Mammary epithelial cell (primary cell): ENCODE measurements at regions of chr4 and their contacts with region 1.

Region 1: GRCh38 chr4:24419181-24420034 is 164.9 kb downstream of the DHX15 start:
- DNase-seq: peak; percentile 50
- H3K4me3 ChIP-seq: no peak overlapping the region
- H3K27ac ChIP-seq: no peak overlapping the region
- H3K4me1 ChIP-seq: no peaks in the 10 kb centered on the region
- H3K27me3 ChIP-seq: peaks cover 3% of the 10 kb centered on the region
- CTCF ChIP-seq: peak; percentile 96

Region 2: DNA sequence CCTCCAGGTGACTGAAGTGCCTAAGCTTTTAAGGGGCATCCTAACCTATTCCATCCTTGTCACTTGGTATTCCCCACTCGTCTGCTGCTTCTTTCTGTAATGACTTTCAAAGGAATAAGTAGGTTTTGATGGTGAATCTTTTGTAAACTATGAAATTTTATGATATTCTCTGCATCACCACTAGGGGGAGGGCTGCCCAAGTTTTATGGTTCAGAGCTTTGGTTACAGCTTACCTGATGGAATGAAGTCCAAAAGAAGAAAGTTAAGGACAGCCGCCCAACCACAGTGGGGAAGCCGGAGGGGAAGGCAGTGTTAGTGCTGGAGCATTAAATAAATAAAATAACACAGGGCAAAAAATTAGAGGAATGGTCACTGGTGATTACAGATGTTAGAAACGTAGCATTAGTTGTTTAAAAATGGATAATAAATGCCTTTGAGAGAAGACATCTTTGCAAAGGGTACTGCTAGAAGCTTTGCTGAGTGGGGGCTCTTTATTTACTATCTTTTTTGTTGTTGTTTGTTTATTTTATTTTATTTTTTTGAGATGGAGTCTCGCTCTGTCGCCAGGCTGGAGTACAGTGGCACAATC is 1521.8 kb before region 1 on chr4:
- CTCF ChIA-PET with region 1: no interaction called
- dilution Hi-C with region 1: no loop called
- in situ Hi-C with region 1: no loop called
- intact Hi-C with region 1: loop called (anchors 1 kb)
- DNase-seq: peak; percentile 4
- H3K4me3 ChIP-seq: no peak overlapping the region
- H3K27ac ChIP-seq: no peak overlapping the region
- H3K4me1 ChIP-seq: no peaks in the 10 kb centered on the region
- H3K27me3 ChIP-seq: no peaks in the 10 kb centered on the region
- CTCF ChIP-seq: peak; percentile 77 to 90

Region 3: DNA sequence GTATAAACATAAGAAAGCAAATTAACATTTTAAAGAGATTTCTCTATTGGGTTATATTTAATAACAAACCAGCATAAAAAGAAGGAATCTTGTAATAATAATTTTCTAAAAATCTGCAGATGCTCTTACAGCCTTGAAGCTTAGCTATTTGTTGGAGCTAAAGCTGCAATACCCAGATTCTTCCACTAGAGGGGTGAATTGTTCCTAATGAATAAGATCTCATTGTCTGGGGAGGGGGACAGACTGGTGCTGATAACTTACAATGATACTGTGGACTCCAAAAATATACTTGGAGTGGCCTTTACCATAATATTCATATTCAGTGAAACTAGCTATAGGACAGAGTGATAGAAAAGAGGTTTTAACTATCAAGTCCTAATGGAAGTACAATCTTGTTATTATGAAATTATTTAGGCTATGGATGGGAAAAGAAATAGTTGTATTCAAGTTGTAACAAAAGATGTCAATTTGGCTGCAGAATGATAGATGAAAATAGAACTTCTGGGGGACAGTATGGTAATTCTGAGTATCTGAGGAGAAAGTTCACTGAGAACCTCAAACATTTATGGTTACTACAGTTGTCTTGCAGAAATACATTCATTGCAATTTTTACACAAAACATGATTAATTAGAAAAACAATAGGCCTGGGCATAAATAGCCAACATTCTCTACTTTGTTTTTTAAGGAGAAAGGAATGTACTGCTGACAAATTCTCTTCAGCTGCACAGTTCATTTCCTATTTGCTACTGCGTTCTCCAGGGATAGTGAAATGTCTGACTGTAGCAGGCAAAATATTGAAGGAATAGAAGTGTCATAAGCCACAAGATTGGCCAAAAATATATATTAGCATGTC is 1283.4 kb before region 1 on chr4:
- CTCF ChIA-PET with region 1: interaction called, 4 read pairs
- dilution Hi-C with region 1: no loop called
- in situ Hi-C with region 1: loop called in 1 of 2 experiments (anchors 25 kb)
- intact Hi-C with region 1: loop called (anchors 5 kb)
- DNase-seq: peak; percentile 8
- H3K4me3 ChIP-seq: no peak overlapping the region
- H3K27ac ChIP-seq: no peak overlapping the region
- H3K4me1 ChIP-seq: no peaks in the 10 kb centered on the region
- H3K27me3 ChIP-seq: no peaks in the 10 kb centered on the region
- CTCF ChIP-seq: peak; percentile 74 to 78

Region 4: DNA sequence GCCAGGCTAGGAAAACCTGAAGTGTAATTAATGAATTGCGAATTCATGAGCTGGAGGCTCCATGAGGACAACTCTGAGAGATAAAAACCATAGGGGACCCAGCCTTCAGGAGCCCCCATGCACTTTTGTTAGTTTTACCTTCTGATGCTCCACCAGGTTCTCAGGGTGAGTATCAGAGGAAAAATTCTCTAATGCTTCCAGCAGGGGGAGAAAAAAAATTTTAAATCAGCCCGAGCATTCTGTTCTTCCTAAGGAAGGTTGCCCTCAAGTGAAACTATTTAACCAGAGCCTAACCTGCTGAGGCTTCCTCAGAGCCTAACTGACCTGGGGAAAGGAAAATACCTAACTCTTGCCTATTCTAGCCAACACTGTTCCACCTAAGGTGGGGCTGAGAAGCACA is 1082.1 kb before region 1 on chr4:
- CTCF ChIA-PET with region 1: no interaction called
- dilution Hi-C with region 1: no loop called
- in situ Hi-C with region 1: no loop called
- intact Hi-C with region 1: loop called (anchors 5 kb)
- DNase-seq: no peak
- H3K4me3 ChIP-seq: no peak overlapping the region
- H3K27ac ChIP-seq: no peak overlapping the region
- H3K4me1 ChIP-seq: peaks cover 17% of the 10 kb centered on the region
- H3K27me3 ChIP-seq: no peaks in the 10 kb centered on the region
- CTCF ChIP-seq: peak; percentile 28 to 36

Region 5: GRCh38 chr4:23857367-23857959 is 561.9 kb before region 1 on chr4:
- CTCF ChIA-PET with region 1: no interaction called
- dilution Hi-C with region 1: no loop called
- in situ Hi-C with region 1: no loop called
- intact Hi-C with region 1: loop called (anchors 1 kb)
- DNase-seq: peak; percentile 9
- H3K4me3 ChIP-seq: no peak overlapping the region
- H3K27ac ChIP-seq: no peak overlapping the region
- H3K4me1 ChIP-seq: no peaks in the 10 kb centered on the region
- H3K27me3 ChIP-seq: no peaks in the 10 kb centered on the region
- CTCF ChIP-seq: peak; percentile 9 to 51

Region 6: DNA sequence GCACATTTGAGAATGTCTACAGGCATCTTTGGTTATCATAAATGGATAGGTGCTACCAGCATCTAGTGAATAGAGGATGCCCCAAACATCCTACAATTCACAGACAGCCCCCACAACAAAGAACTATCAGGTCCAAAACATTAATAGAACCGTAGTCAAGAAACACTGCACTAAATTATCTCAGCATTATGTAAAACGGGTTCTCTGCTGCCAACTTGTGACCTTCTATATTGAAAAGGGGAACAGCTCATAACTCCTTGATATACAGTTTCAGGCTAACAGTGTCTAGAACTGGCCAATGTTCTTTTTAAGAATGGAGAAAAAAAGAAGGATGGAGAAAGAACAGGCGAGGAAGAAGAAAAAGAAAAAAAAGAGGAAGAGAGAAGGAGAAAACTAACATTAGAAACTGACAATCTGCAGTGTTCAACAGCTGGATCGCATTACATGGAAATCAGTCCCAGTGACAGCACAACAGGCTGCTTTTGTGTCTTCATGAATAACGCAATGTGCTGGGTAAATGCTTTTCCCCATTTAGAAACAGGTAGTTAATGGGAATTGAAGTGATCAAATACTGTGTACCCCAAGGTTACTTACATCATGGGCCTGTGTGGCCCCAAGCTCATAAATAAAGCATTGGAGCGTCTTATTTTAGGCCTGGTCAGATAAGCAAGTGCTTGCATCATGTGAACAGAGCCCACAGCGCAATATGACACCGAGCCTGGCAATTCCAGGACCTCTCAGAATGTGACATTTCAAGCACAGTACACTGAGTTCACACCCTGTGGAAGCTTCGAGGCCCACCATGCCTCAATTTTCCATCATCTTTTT is 174.5 kb before region 1 on chr4:
- CTCF ChIA-PET with region 1: no interaction called
- dilution Hi-C with region 1: no loop called
- in situ Hi-C with region 1: no loop called
- intact Hi-C with region 1: no loop called
- DNase-seq: no peak
- H3K4me3 ChIP-seq: no peak overlapping the region
- H3K27ac ChIP-seq: no peak overlapping the region
- H3K4me1 ChIP-seq: no peaks in the 10 kb centered on the region
- H3K27me3 ChIP-seq: no peaks in the 10 kb centered on the region
- CTCF ChIP-seq: no peak